ENCODE measurements at regions of chr3 and their contacts with region 1.

Region 1: DNA sequence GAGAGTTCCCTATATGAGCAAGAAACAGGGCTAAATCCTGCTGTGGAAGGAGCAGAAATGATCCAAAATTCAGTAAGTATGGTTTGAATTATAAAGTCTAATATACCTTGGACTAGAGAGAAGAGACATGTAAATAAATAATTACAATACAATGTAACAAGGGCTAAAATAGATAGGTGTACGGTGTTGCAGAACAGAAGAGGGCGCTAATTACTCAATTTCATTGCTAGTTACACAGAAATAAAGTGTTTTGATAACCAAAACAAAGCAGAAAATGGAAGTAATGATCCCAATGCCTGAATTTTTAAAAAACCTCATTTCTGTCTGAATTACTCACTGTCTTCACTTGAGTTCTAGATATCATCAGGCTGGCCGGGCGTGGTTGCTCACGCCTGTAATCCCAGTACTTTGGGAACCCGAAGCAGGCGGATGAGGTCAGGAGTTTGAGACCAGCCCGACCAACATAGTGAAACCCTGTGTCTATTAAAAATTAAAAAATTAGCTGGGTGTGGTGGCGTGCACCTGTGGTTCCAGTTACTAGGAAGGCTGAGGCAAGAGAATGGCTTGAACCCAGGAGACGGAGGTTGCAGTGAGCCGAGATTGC is 8.3 kb upstream of the PLCH1 start:
- DNase-seq: no peak
- ATAC-seq: no peak
- H3K4me3 ChIP-seq: no peak overlapping the region
- H3K27ac ChIP-seq: no peak overlapping the region
- H3K4me1 ChIP-seq: no peaks in the 10 kb centered on the region
- H3K27me3 ChIP-seq: no peaks in the 10 kb centered on the region

Region 2: GRCh38 chr3:155859859-155860258 is 106.7 kb after region 1 on chr3:
- intact Hi-C with region 1: loop called in 1 of 4 experiments (anchors 10 kb)
- DNase-seq: no peak
- ATAC-seq: no peak
- H3K4me3 ChIP-seq: no peak overlapping the region
- H3K27ac ChIP-seq: no peak overlapping the region
- H3K4me1 ChIP-seq: no peaks in the 10 kb centered on the region
- H3K27me3 ChIP-seq: no peaks in the 10 kb centered on the region

Measured in right cardiac atrium (tissue), 5 donors.